ENCODE measurements at regions of chr14 and their contacts with region 1.

Region 1: GRCh38 chr14:88005978-88006851 is 1.3 kb downstream of the GPR65 start:
- DNase-seq: peak; percentile 91
- H3K4me3 Mint-ChIP-seq: peak overlapping the region; percentile 87
- H3K27ac Mint-ChIP-seq: peak overlapping the region; percentile 90
- H3K4me1 Mint-ChIP-seq: peaks cover 61% of the 10 kb centered on the region
- H3K27me3 Mint-ChIP-seq: no peaks in the 10 kb centered on the region

Region 2: GRCh38 chr14:87952307-87953094 is 53.7 kb before region 1 on chr14:
- intact Hi-C with region 1: loop called (anchors 5 kb)
- DNase-seq: peak; percentile 61
- H3K4me3 Mint-ChIP-seq: peak overlapping the region; percentile 67
- H3K27ac Mint-ChIP-seq: no peak overlapping the region
- H3K4me1 Mint-ChIP-seq: peaks cover 17% of the 10 kb centered on the region
- H3K27me3 Mint-ChIP-seq: no peaks in the 10 kb centered on the region

Region 3: GRCh38 chr14:88026890-88027289 is 20.7 kb after region 1 on chr14:
- intact Hi-C with region 1: loop called (anchors 1 kb)
- DNase-seq: peak; percentile 67
- H3K4me3 Mint-ChIP-seq: peak overlapping the region; percentile 57
- H3K27ac Mint-ChIP-seq: peak overlapping the region; percentile 82
- H3K4me1 Mint-ChIP-seq: peaks cover 63% of the 10 kb centered on the region
- H3K27me3 Mint-ChIP-seq: no peaks in the 10 kb centered on the region

Region 4: DNA sequence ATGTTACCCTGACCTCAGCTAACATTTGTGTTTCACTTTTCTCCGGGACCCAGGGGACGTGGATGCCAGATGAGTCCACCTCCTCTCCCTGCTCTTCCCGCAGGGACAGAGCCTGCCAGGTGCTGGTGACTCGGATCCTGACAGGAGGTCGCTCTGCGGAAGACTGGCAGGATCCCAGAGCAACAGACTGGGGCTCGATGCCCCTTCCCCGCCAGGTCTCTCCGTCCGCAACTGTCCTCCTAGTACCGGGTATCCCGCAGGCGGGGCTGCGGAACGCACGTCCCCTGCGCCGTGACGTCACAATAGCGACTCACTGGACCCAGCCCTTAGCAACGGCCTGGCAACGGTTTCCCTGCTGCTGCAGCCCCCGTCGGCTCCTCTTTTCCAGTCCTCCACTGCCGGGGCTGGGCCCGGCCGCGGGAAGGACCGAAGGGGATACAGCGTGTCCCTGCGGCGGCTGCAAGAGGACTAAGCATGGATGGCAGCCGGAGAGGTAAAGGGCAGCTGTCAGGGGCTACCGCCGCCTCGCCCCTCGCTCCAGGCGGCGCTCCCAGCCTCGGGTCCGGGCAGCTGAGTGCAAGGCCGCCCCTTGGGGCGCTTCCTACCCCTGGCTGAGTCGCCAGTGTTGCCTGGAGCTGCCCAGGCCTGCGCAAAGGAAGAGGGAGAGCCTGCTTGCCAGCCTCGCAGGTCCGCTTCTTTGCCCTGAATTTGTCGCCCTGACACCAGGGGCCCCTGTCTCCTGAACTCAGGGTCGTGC is 379.3 kb after region 1 on chr14 and contains the start of gene SPATA7:
- intact Hi-C with region 1: loop called (anchors 5 kb)
- DNase-seq: peak; percentile 95
- H3K4me3 Mint-ChIP-seq: peak within 1 kb of the TSS; percentile 99
- H3K27ac Mint-ChIP-seq: peak within 1 kb of the TSS; percentile 61
- H3K4me1 Mint-ChIP-seq: peaks cover 20% of the 10 kb centered on the region
- H3K27me3 Mint-ChIP-seq: peaks cover 15% of the 10 kb centered on the region
- total RNA-seq, gene SPATA7: 1.3 and 2.3 TPM in 2 replicates

Region 5: DNA sequence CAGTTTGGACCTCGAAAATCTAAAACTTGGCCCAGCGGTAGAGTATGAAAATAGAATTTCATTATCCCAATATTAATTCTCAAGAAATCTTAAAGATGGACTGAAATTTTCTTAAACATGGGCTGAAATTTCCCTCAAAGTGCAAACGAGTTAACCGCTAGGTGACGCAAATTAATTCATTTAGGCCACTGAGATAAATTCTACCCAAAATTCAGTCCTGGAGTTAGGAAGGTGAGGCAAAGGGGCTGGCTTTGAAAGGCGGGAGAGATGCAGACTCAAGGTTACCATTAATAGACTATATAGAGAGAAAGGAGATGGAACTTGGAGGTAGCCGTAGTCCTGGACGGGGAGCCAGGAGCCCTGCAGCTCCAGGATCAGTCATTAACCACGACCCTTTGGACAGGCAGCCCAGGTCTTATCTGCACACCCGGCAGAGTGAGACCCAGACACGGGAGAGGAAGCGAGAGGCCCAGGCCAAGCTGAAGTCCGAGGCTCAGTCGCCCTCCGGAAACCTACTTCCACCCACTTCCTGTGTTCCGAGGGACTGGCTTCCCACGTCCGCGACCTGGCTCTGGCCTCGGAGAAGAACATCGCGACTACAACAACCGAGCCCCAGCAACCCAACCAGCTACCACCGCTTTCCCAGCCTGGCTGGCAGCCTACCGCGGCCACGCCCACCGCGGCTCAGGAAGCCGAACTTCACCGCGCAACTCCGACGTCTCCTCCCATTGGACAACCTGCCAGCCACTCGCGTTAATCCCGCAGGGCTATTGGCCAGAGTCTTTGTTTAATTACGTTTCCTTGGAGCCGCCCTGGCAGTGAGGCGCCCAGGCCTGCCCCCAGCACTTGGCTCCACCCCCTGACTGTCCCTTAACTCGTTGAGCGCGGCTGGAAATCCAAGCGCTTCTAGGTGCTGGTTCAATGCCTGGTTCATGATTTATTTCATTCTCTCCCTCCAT is 1948.1 kb after region 1 on chr14 and contains the start of gene EFCAB11:
- intact Hi-C with region 1: loop called (anchors 5 kb)
- DNase-seq: peak; percentile 99
- H3K4me3 Mint-ChIP-seq: peak within 1 kb of the TSS; percentile 90
- H3K27ac Mint-ChIP-seq: peak within 1 kb of the TSS; percentile 90
- H3K4me1 Mint-ChIP-seq: peaks cover 40% of the 10 kb centered on the region
- H3K27me3 Mint-ChIP-seq: no peaks in the 10 kb centered on the region
- total RNA-seq, gene EFCAB11: 6.8 and 7.8 TPM in 2 replicates

Measured in activated CD4-positive, alpha-beta T cell treated with anti-CD3 and anti-CD28 coated beads, Interleukin-2, amount 10 ng/mL, durations not matched to agents 24 days and 14 days (primary cell).